SK-N-SH (cell line): ENCODE measurements at regions of chr5 and their contacts with region 1.

Region 1: DNA sequence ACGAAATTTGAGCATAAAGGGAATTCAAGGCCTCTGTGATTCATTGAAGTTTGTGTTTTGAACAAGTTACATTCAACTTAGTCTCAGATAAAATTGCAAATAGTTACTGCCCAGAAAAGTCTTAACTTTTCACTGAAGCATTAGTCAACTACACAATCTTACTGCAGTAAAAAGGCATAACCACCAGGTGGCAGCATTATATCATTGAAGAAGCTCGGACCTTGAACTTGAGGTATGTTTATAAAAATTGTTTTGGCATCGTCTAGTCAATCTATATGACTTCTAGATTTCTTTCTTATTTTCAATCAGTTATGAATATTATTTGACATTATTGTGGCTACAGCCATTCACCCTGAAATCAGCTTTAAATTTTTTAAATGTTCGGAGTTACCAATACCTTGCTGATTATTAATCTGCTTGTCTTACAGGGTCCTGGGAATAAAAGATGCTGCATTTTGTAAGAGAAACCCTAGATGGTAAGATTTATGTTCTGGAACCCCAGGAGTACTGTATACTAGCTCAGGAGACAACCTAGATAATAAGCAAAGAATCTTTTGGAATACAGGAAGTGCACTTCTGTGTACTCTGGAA is 83.9 kb upstream of the GRAMD2B start:
- DNase-seq: peak; percentile 47
- H3K4me3 ChIP-seq: no peak overlapping the region
- H3K27ac ChIP-seq: no peak overlapping the region; a peak in 1 of 4 replicates
- H3K4me1 ChIP-seq: no peaks in the 10 kb centered on the region
- H3K27me3 ChIP-seq: no peaks in the 10 kb centered on the region
- CTCF ChIP-seq: peak; percentile 92
- EP300 ChIP-seq: no peak
- RAD21 ChIP-seq: peak; percentile 92

Region 2: GRCh38 chr5:126219616-126220015 is 119.7 kb before region 1 on chr5:
- CTCF ChIA-PET with region 1: no interaction called
- POLR2A ChIA-PET with region 1: no interaction called
- DNase-seq: no peak
- H3K4me3 ChIP-seq: no peak overlapping the region
- H3K27ac ChIP-seq: no peak overlapping the region
- H3K4me1 ChIP-seq: no peaks in the 10 kb centered on the region
- H3K27me3 ChIP-seq: no peaks in the 10 kb centered on the region
- CTCF ChIP-seq: no peak
- EP300 ChIP-seq: no peak
- RAD21 ChIP-seq: no peak

Region 3: DNA sequence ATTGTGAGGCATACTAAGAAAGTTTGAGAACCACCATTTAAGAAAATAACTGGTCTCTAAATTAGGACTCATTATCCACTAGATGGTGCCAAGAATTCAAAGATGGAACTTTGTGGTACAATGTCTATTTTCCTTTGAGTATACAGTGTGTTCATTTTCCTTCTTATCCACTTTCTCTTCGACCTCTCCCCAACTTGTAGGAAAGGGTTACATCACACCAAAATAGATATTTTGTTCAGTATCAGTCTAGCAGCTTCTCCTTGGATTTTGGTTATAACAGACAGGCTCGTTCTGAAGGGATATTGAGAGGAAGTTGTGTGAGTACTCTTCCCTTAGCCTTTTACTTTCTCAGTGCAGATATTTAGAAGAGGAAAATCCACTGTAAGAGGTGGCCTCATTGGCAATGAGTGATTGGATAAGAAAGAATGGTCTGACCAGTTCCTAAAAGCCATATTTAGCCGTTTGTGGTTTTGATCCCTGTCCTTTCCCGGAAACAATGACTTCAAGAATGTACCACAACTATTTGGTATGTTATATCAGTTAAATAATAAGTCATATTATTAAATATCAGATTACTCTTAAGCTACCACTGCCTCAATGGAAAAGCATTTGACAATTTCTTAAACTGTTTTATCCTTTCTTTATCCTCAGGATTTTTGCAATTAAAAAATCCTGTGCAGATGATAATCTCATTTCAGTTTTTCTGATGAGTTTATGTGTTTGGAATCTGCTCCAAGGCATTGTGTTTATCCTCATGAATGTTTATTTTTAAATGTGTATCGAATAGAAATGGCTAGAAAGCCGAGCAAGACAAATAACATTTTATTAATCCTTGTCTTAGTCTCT is 14.9 kb after region 1 on chr5:
- CTCF ChIA-PET with region 1: interaction called, 20 read pairs
- POLR2A ChIA-PET with region 1: no interaction called
- DNase-seq: peak; percentile 38
- H3K4me3 ChIP-seq: peak overlapping the region; percentile 21 to 46; a peak in 3 of 4 replicates
- H3K27ac ChIP-seq: peak overlapping the region; percentile 93 to 98
- H3K4me1 ChIP-seq: peaks cover 0 to 20% of the 10 kb centered on the region in 2 experiments; a peak in 3 of 4 replicates
- H3K27me3 ChIP-seq: no peaks in the 10 kb centered on the region
- CTCF ChIP-seq: peak; percentile 68
- EP300 ChIP-seq: peak; percentile 73 to 100
- RAD21 ChIP-seq: peak; percentile 81

Region 4: GRCh38 chr5:126538579-126538978 is 199.3 kb after region 1 on chr5:
- CTCF ChIA-PET with region 1: interaction called, 33 read pairs
- POLR2A ChIA-PET with region 1: no interaction called
- DNase-seq: no peak
- H3K4me3 ChIP-seq: no peak overlapping the region
- H3K27ac ChIP-seq: peak overlapping the region in 1 of 2 experiments; percentile 66; a peak in 2 of 4 replicates
- H3K4me1 ChIP-seq: no peaks in the 10 kb centered on the region
- H3K27me3 ChIP-seq: no peaks in the 10 kb centered on the region
- CTCF ChIP-seq: no peak
- EP300 ChIP-seq: no peak
- RAD21 ChIP-seq: no peak

Region 5: GRCh38 chr5:126544087-126544740 is 204.9 kb after region 1 on chr5:
- CTCF ChIA-PET with region 1: interaction called, 33 read pairs
- POLR2A ChIA-PET with region 1: no interaction called
- DNase-seq: peak; percentile 30
- H3K4me3 ChIP-seq: no peak overlapping the region; a peak in 1 of 4 replicates
- H3K27ac ChIP-seq: no peak overlapping the region
- H3K4me1 ChIP-seq: no peaks in the 10 kb centered on the region
- H3K27me3 ChIP-seq: no peaks in the 10 kb centered on the region
- CTCF ChIP-seq: peak; percentile 68
- EP300 ChIP-seq: no peak
- RAD21 ChIP-seq: peak; percentile 58

Region 6: GRCh38 chr5:126600631-126601511 is 261.6 kb after region 1 on chr5 and contains the start of gene PHAX:
- CTCF ChIA-PET with region 1: interaction called, 28 read pairs
- POLR2A ChIA-PET with region 1: no interaction called
- DNase-seq: peak; percentile 94
- H3K4me3 ChIP-seq: peak within 1 kb of the TSS; percentile 81 to 82
- H3K27ac ChIP-seq: peak within 1 kb of the TSS; percentile 81
- H3K4me1 ChIP-seq: peaks cover 6 to 8% of the 10 kb centered on the region in 2 experiments; a peak in 2 of 4 replicates
- H3K27me3 ChIP-seq: no peaks in the 10 kb centered on the region
- CTCF ChIP-seq: peak; percentile 74
- EP300 ChIP-seq: peak in 1 of 2 experiments; percentile 35; a peak in 1 of 4 replicates
- RAD21 ChIP-seq: peak; percentile 33
- polyA plus RNA-seq, gene PHAX: 25.1 and 27.4 TPM in 2 replicates